Right lobe of liver (tissue), 6 donors: ENCODE measurements at regions of chr10 and their contacts with region 1.

Region 1: GRCh38 chr10:11793762-11794479 is 29.2 kb upstream of the PROSER2 start:
- DNase-seq: peak; percentile 75 to 91 (median 87)
- ATAC-seq: peak; percentile 91 to 95 (median 94)
- H3K4me3 ChIP-seq: no peak overlapping the region
- H3K27ac ChIP-seq: peak overlapping the region; percentile 18 to 70 (median 63)
- H3K4me1 ChIP-seq: peaks cover 0 to 15% (median 4%) of the 10 kb centered on the region in 4 donors
- H3K27me3 ChIP-seq: no peaks in the 10 kb centered on the region
- CTCF ChIP-seq: peak in 1 of 4 donors; percentile 21
- POLR2A ChIP-seq: no peak

Region 2: GRCh38 chr10:11505639-11506038 is 288.3 kb before region 1 on chr10:
- intact Hi-C with region 1: no loop called
- DNase-seq: no peak
- ATAC-seq: no peak
- H3K4me3 ChIP-seq: no peak overlapping the region
- H3K27ac ChIP-seq: no peak overlapping the region
- H3K4me1 ChIP-seq: no peaks in the 10 kb centered on the region
- H3K27me3 ChIP-seq: no peaks in the 10 kb centered on the region
- CTCF ChIP-seq: no peak
- POLR2A ChIP-seq: no peak

Region 3: GRCh38 chr10:11986593-11987216 is 192.8 kb after region 1 on chr10:
- intact Hi-C with region 1: loop called in 1 of 2 experiments (anchors 10 kb)
- DNase-seq: peak; percentile 82 to 88 (median 82)
- ATAC-seq: peak; percentile 91 to 95 (median 94)
- H3K4me3 ChIP-seq: peak overlapping the region in 1 of 3 donors; percentile 6
- H3K27ac ChIP-seq: peak overlapping the region; percentile 70 to 86 (median 86)
- H3K4me1 ChIP-seq: peaks cover 0 to 3% (median 0%) of the 10 kb centered on the region in 4 donors
- H3K27me3 ChIP-seq: no peaks in the 10 kb centered on the region
- CTCF ChIP-seq: peak; percentile 88 to 98 (median 90)
- POLR2A ChIP-seq: no peak